Left colon (tissue), 2 donors: ENCODE measurements at regions of chr10 and their contacts with region 1.

Region 1: DNA sequence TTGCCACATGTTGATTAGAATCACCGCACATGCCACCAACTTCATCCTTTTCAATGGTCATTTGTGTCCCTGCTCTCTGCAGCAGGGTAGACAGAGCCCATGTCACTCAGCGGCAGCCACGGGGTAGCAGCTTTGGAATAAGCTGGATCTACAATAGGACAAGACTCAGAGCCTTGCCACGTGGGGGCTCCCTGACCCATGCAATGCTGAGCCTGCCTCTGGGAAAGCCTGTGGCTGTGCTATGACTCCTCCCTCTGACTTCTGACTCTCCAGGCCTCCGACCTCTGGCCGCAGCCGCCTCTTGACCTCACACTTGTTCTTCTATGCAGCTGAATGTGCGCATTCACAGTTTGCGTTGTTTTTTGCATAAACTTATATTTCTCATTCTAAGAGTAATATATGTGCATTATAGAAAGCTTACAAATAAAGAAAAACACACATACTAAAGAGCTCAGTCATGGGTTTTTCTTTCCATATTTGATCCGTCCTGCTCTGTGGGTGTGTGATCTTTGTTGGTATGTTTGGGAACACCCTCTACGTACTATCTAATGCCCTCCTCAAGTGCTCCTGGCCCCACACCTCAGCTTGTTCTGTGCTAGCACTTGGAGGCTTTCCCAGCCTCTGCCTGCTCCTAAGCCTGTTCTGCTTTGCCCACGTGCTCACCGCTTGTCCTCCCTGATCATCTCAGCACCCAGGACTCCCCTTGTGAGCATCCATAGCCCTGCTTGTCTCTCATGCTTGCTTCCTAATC is 198.0 kb upstream of the MKI67 start:
- DNase-seq: peak in 1 of 2 donors; percentile 23
- ATAC-seq: peak; percentile 62

Region 2: GRCh38 chr10:128526791-128527375 is 202.6 kb after region 1 on chr10:
- intact Hi-C with region 1: loop called in 1 of 2 experiments (anchors 10 kb)
- DNase-seq: no peak
- ATAC-seq: no peak